ENCODE measurements at regions of chr14 and their contacts with region 1.

Region 1: DNA sequence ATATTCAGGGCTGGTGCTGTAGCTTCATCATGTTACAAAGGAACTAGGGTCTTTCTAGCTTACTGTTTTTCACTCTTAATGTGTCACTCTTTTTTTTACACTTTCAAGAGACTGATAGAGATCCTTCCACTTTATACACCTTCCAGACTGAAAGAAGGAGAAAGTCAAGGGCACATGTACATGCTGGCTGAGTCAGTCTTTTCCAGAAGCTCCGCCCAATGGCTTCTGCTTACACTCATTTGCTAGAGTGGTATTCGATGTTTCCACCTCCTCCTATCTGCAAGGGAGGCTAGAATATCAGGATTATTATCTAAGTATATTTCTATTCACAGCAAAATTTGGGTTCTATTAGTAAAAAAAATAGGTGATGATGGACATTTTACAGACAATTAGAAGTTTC is 325.8 kb upstream of the OR4E1 start:
- DNase-seq: no peak
- H3K4me3 ChIP-seq: no peak overlapping the region
- H3K27ac ChIP-seq: no peak overlapping the region
- H3K27me3 ChIP-seq: no peaks in the 10 kb centered on the region
- CTCF ChIP-seq: no peak

Region 2: DNA sequence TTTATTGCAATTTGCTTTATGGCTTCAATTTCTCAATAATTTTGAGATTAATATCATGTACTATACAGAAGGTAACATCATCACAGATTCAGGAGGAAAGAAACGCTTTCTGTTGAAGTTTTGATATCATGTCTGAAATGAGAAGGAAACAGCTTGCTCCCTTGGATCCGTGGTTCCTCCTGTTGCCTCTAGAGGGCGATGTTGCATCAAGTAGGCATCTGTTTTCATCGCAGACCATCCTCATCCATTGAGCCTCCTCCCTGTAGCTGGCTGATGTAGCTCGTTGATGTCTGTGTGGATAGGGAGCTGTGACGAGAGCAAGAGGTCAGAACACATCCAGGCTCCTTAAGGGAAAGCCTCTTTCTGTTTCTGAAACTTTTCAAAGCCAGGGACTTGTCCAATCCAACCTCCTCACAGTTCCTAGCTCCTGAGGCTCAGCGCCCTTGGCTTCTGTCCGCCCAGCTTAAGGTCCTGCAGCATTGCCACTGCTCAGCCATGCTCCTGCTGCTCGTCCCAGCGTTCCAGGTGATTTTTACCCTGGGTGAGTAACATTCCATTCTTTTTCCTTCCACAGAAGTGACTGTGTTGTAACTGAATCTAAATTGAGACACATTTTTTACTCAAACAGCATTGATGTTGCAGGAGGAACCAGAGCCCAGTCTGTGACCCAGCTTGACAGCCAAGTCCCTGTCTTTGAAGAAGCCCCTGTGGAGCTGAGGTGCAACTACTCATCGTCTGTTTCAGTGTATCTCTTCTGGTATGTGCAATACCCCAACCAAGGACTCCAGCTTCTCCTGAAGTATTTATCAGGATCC is 21.0 kb before region 1 on chr14:
- CTCF ChIA-PET with region 1: interaction called, 10 read pairs
- POLR2A ChIA-PET with region 1: no interaction called
- DNase-seq: no peak
- H3K4me3 ChIP-seq: no peak overlapping the region
- H3K27ac ChIP-seq: no peak overlapping the region
- H3K27me3 ChIP-seq: no peaks in the 10 kb centered on the region
- CTCF ChIP-seq: peak; percentile 67

Region 3: GRCh38 chr14:21987937-21988336 is 11.5 kb before region 1 on chr14:
- CTCF ChIA-PET with region 1: interaction called, 14 read pairs
- POLR2A ChIA-PET with region 1: no interaction called
- DNase-seq: no peak
- H3K4me3 ChIP-seq: no peak overlapping the region
- H3K27ac ChIP-seq: no peak overlapping the region
- H3K27me3 ChIP-seq: no peaks in the 10 kb centered on the region
- CTCF ChIP-seq: peak; percentile 58

Region 4: GRCh38 chr14:22010545-22011252 is 11.3 kb after region 1 on chr14:
- CTCF ChIA-PET with region 1: no interaction called
- POLR2A ChIA-PET with region 1: no interaction called
- DNase-seq: no peak
- H3K4me3 ChIP-seq: no peak overlapping the region
- H3K27ac ChIP-seq: no peak overlapping the region
- H3K27me3 ChIP-seq: no peaks in the 10 kb centered on the region
- CTCF ChIP-seq: no peak

Measured in AG04450 (cell line).